Caco-2 (cell line): ENCODE measurements at regions of chr3 and their contacts with region 1.

Region 1: DNA sequence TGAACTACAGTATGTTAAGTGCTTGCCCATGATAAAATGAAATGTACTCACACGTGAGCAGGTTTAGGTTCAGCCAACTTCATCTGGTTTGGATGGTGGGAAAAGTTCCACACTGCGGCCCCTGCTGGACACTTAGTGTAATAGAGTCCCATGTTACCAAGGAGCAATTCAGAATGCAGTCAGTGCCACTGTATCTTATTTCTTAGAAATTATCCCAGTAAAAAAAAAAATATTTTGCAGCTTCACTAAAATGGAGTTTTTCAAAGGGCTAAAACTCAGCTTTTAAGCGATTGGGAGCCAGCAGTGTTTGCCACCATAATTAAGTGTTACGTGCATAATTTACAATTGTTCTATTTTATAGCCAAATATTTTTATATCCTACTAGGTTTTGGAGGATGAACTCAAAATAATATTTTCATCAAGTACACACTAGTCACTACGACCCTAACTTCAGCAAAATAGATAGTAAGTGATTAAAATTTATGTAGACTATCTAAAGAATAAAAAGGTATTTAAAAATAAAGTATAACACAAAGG is 371.7 kb upstream of the GBE1 start:
- DNase-seq: peak; percentile 40 to 57
- H3K4me3 ChIP-seq: no peak overlapping the region
- H3K4me3 Mint-ChIP-seq: no peak overlapping the region
- H3K27ac Mint-ChIP-seq: no peak overlapping the region
- H3K4me1 ChIP-seq: no peaks in the 10 kb centered on the region
- H3K4me1 Mint-ChIP-seq: no peaks in the 10 kb centered on the region
- H3K27me3 ChIP-seq: no peaks in the 10 kb centered on the region
- H3K27me3 Mint-ChIP-seq: no peaks in the 10 kb centered on the region
- CTCF ChIP-seq: peak; percentile 73 to 81

Region 2: DNA sequence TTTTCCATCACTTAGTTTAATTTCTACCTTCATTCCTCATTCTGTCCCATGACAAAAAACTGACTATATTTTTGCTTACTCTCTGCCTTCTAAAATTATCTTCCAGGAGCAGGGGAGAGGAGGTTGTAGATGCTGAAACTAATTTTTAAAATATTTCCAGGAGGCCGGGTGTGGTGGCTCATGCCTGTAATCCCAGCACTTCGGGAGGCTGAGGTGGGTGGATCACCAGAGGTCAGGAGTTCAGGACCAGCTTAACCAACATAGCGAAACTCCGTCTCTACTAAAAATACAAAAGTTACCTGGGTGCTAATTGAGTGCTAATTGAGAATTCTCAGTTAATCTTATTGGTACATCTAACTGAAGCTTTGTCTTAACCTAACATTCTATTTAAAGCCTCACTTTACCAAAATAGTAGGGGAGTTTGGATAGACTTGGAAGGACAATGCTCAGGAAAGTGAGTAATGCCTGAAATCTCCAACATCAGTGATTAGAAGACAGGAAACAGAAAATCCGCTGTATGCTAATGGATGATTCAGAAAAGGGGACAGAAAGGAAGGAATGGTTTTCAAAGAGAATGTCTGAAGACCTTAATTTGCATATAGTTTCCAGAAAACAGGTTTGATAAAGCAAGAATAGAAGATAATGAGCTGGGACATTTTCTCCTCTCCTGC is 707.8 kb before region 1 on chr3:
- CTCF ChIA-PET with region 1: no interaction called
- POLR2A ChIA-PET with region 1: no interaction called
- intact Hi-C with region 1: loop called (anchors 10 kb)
- DNase-seq: no peak
- H3K4me3 ChIP-seq: no peak overlapping the region
- H3K4me3 Mint-ChIP-seq: no peak overlapping the region
- H3K27ac Mint-ChIP-seq: no peak overlapping the region
- H3K4me1 ChIP-seq: no peaks in the 10 kb centered on the region
- H3K4me1 Mint-ChIP-seq: no peaks in the 10 kb centered on the region
- H3K27me3 ChIP-seq: no peaks in the 10 kb centered on the region
- H3K27me3 Mint-ChIP-seq: no peaks in the 10 kb centered on the region
- CTCF ChIP-seq: no peak

Region 3: GRCh38 chr3:81581966-81582599 is 551.1 kb before region 1 on chr3:
- CTCF ChIA-PET with region 1: no interaction called
- POLR2A ChIA-PET with region 1: no interaction called
- intact Hi-C with region 1: loop called (anchors 1 kb)
- DNase-seq: peak; percentile 33 to 51
- H3K4me3 ChIP-seq: no peak overlapping the region
- H3K4me3 Mint-ChIP-seq: no peak overlapping the region
- H3K27ac Mint-ChIP-seq: no peak overlapping the region
- H3K4me1 ChIP-seq: no peaks in the 10 kb centered on the region
- H3K4me1 Mint-ChIP-seq: peaks cover 7% of the 10 kb centered on the region
- H3K27me3 ChIP-seq: no peaks in the 10 kb centered on the region
- H3K27me3 Mint-ChIP-seq: no peaks in the 10 kb centered on the region
- CTCF ChIP-seq: peak; percentile 54 to 79

Region 4: DNA sequence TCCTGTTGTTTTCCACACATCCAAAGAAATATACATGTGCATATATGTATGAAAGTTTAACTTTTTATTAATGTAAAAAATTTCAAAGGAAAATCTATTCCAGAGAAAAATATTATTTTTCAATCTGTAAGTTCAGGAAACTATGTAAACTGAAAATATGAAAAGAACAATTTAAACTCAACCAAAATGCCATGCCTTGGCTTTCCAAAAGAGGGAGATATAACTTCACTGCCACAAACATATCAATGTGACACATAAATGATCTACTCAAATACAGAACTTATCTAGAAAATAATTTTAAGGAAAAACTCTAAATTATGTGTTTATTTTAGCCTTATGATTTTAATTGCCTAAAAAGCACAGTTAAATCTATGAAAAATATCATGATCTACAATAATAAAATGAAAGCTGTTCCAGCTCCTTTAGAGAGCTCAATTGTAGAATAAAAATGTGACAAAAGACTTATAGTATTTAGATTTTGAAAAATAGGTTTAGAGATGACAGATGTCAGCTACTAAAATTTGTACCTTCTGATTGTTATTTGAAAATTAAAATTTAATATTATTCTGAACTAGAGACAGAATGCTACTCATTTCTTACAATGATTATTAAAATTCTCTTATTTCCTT is 466.5 kb before region 1 on chr3:
- CTCF ChIA-PET with region 1: interaction called, 3 read pairs
- POLR2A ChIA-PET with region 1: no interaction called
- intact Hi-C with region 1: loop called (anchors 1 kb)
- DNase-seq: no peak
- H3K4me3 ChIP-seq: no peak overlapping the region
- H3K4me3 Mint-ChIP-seq: no peak overlapping the region
- H3K27ac Mint-ChIP-seq: no peak overlapping the region
- H3K4me1 ChIP-seq: no peaks in the 10 kb centered on the region
- H3K4me1 Mint-ChIP-seq: no peaks in the 10 kb centered on the region
- H3K27me3 ChIP-seq: no peaks in the 10 kb centered on the region
- H3K27me3 Mint-ChIP-seq: no peaks in the 10 kb centered on the region
- CTCF ChIP-seq: peak; percentile 46 to 51

Region 5: GRCh38 chr3:81910244-81910852 is 222.8 kb before region 1 on chr3:
- CTCF ChIA-PET with region 1: no interaction called
- POLR2A ChIA-PET with region 1: no interaction called
- intact Hi-C with region 1: loop called (anchors 1 kb)
- DNase-seq: peak in 1 of 2 experiments; percentile 41
- H3K4me3 ChIP-seq: no peak overlapping the region
- H3K4me3 Mint-ChIP-seq: no peak overlapping the region
- H3K27ac Mint-ChIP-seq: no peak overlapping the region
- H3K4me1 ChIP-seq: no peaks in the 10 kb centered on the region
- H3K4me1 Mint-ChIP-seq: no peaks in the 10 kb centered on the region
- H3K27me3 ChIP-seq: no peaks in the 10 kb centered on the region
- H3K27me3 Mint-ChIP-seq: no peaks in the 10 kb centered on the region
- CTCF ChIP-seq: peak; percentile 59 to 75

Region 6: GRCh38 chr3:81995329-81995728 is 137.8 kb before region 1 on chr3:
- CTCF ChIA-PET with region 1: interaction called, 7 read pairs
- POLR2A ChIA-PET with region 1: no interaction called
- intact Hi-C with region 1: loop called (anchors 1 kb)
- DNase-seq: no peak
- H3K4me3 ChIP-seq: no peak overlapping the region
- H3K4me3 Mint-ChIP-seq: no peak overlapping the region
- H3K27ac Mint-ChIP-seq: no peak overlapping the region
- H3K4me1 ChIP-seq: no peaks in the 10 kb centered on the region
- H3K4me1 Mint-ChIP-seq: no peaks in the 10 kb centered on the region
- H3K27me3 ChIP-seq: no peaks in the 10 kb centered on the region
- H3K27me3 Mint-ChIP-seq: no peaks in the 10 kb centered on the region
- CTCF ChIP-seq: peak in 1 of 2 experiments; percentile 5